ENCODE measurements at regions of chr11 and their contacts with region 1.

Region 1: DNA sequence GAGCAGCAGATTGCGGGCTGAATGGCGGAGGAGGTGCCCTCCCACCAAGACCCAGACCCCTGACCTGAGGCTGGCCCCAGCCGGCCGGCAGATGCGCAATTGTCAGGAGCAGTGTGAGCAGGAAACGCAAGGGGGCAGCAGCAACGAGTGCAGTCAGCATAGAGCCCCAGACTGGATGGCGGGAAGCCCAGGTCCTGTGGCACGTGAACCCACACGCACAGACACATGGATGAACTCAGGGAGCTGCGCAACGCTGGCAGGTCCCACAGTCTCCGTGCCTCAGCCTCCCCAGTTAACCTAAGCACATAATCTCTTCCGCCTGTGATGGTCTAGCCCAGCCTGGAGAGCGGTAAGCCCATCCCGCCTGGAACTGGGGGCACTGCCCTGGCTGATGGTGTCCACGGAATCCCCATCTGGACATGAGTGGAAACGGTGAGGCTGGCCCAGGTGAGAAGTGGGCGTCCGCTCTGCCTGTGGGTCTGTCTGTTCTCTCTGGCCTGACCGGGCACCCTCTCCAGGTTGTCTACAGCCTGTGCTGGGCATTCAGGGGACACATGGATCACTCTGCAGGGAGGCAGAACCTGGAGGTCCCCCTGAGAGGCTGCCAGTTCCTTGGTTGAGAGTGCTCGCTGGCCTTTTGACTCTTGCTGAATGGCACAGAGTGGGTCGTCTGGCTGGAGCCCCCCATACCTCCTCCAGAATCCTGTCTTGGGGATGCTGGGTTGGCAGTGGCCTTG is 626 bp upstream of the TBX10 start:
- DNase-seq: peak in 1 of 2 donors; percentile 53
- ATAC-seq: peak; percentile 53 to 60
- H3K4me3 ChIP-seq: no peak overlapping the region
- H3K27ac ChIP-seq: no peak overlapping the region
- H3K4me1 ChIP-seq: no peaks in the 10 kb centered on the region
- H3K27me3 ChIP-seq: peaks cover 6 to 15% (median 9%) of the 10 kb centered on the region in 3 donors
- CTCF ChIP-seq: peak in 3 of 5 experiments; percentile 44 to 57 (median 55)
- POLR2A ChIP-seq: no peak

Region 2: DNA sequence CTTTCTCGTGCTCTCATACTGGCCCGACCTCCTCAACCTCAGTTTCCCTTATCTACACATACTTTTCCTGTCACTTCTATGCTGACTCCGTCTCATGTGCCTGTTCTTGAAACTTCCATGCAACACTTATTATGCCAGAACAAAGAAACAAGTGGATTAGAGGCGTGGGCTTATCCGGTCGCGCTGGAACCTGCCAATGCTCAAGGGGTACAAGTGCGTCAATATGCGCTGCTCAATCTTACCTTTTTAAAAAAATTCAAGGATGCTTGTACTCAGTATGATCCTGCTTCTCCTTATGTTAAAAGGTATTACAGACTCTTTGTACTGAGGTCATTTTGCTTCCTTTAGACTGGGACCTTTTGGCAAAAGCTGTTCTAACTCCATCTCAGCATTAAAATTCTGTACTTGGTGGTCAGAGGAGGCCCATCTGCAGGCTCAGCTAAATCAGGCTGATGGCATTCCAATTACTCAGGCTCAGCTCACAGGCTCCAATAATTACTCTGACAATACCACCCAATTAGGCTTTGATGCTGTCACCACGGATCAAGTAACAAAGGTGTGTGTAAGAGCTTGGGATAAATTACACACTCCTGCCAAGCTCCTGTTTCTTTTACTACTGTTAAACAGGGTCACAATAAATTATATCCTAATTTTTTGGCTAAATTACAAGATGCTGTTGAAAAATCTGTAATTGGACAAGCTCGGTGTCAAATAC is 60.5 kb after region 1 on chr11:
- in situ Hi-C with region 1: no loop called
- intact Hi-C with region 1: loop called (anchors 10 kb)
- DNase-seq: no peak
- ATAC-seq: no peak
- H3K4me3 ChIP-seq: no peak overlapping the region
- H3K27ac ChIP-seq: no peak overlapping the region
- H3K4me1 ChIP-seq: no peaks in the 10 kb centered on the region
- H3K27me3 ChIP-seq: peaks cover 4 to 21% (median 15%) of the 10 kb centered on the region in 3 donors
- CTCF ChIP-seq: no peak
- POLR2A ChIP-seq: no peak

Measured in gastrocnemius medialis (tissue), 4 donors.